ENCODE measurements at regions of chr4 and their contacts with region 1.

Region 1: DNA sequence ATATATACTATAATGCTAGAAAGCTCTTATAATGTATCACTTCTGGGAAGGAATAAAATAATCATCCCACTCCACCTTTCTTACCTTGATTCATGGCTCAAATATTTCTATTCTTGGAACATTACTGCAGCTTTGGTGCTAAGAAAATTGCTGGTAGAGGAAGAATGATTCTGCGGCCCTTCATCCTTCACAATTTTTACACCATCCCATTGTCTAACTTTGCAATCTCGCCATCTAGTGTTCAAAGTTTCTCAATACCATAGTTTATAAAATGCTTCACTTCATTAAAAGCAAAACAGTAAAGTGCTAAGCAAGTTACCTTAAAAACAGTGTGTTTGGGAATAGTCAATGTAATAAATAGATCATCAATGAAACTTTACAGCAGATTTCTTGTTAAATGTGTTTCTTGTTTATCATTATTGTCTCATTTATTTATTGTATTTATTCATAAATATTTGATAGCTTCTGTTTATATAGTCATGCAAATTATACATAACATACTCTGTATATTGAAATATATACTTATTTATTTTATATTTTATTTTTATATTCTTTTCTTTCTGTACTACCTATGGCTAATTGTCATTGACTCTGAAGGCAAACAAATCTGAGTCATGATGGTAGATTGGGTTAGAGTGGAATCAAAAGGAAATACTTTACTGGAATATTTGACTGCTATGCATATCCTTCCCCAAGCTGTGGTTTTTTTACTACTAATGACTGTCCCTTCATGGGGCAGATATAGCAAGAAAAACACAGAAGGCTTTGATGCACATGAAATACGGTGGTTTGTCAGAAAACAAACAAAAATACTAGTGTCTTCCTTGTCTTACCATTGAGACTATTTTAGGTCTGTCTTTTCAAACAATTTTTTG is 390.7 kb downstream of the MAPK10 start:
- DNase-seq: peak; percentile 31
- H3K4me3 ChIP-seq: no peak overlapping the region; a peak in 1 of 4 replicates
- H3K27ac ChIP-seq: peak overlapping the region in 1 of 2 experiments; percentile 29; a peak in 2 of 4 replicates
- H3K4me1 ChIP-seq: peaks cover 0 to 3% of the 10 kb centered on the region in 2 experiments; a peak in 1 of 4 replicates
- H3K27me3 ChIP-seq: no peaks in the 10 kb centered on the region
- CTCF ChIP-seq: peak; percentile 73
- EP300 ChIP-seq: no peak
- RAD21 ChIP-seq: peak; percentile 80

Region 2: GRCh38 chr4:85792376-85793232 is 176.6 kb before region 1 on chr4:
- CTCF ChIA-PET with region 1: interaction called, 117 read pairs
- POLR2A ChIA-PET with region 1: no interaction called
- DNase-seq: no peak
- H3K4me3 ChIP-seq: no peak overlapping the region
- H3K27ac ChIP-seq: peak overlapping the region in 1 of 2 experiments; percentile 85; a peak in 2 of 4 replicates
- H3K4me1 ChIP-seq: peaks cover 0 to 20% of the 10 kb centered on the region in 2 experiments; a peak in 2 of 4 replicates
- H3K27me3 ChIP-seq: no peaks in the 10 kb centered on the region
- CTCF ChIP-seq: no peak
- EP300 ChIP-seq: no peak
- RAD21 ChIP-seq: no peak

Region 3: GRCh38 chr4:85938062-85938461 is 31.1 kb before region 1 on chr4:
- CTCF ChIA-PET with region 1: interaction called, 10 read pairs
- POLR2A ChIA-PET with region 1: no interaction called
- DNase-seq: no peak
- H3K4me3 ChIP-seq: no peak overlapping the region
- H3K27ac ChIP-seq: no peak overlapping the region
- H3K4me1 ChIP-seq: no peaks in the 10 kb centered on the region
- H3K27me3 ChIP-seq: no peaks in the 10 kb centered on the region
- CTCF ChIP-seq: no peak
- EP300 ChIP-seq: no peak
- RAD21 ChIP-seq: no peak

Region 4: DNA sequence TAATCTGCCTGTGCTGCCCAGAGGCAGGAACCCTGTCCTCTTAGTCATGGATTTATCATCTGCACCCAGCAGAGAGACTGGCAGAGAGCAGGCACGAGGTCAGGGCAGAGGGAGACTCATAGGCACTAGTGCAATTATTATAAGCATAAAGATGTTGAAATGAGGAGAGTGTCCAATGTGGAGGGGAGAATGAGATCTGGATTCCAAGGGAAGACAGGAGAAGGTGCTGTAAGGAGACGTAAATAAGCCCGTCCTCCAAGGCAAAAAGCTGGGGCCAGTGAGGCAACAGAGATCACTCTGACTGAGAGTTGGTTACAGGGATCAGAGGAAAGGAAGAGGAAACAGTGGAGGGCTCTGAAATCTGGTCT is 15.5 kb before region 1 on chr4:
- CTCF ChIA-PET with region 1: interaction called, 20 read pairs
- POLR2A ChIA-PET with region 1: no interaction called
- DNase-seq: no peak
- H3K4me3 ChIP-seq: no peak overlapping the region
- H3K27ac ChIP-seq: peak overlapping the region in 1 of 2 experiments; percentile 61; a peak in 1 of 4 replicates
- H3K4me1 ChIP-seq: peaks cover 0 to 2% of the 10 kb centered on the region in 2 experiments; a peak in 2 of 4 replicates
- H3K27me3 ChIP-seq: no peaks in the 10 kb centered on the region
- CTCF ChIP-seq: no peak
- EP300 ChIP-seq: no peak
- RAD21 ChIP-seq: no peak

Region 5: DNA sequence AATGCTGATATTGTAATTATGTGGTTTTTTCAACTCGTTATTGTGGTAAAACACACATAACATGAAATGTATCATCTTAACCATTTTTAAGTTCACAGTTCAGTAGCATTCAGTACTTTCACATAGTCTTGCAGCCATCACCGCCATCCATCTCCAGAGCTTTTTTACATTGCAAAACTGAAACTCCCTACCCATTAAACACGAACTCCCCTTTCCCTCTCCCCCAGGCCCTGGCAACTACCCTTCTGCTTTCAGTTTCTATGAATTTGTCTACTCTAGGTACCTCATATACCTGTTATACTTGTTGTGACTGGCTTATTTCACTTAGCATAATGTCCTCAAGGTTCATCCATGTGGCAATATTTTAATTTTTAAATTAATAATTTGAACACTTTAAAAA is 10.1 kb after region 1 on chr4:
- CTCF ChIA-PET with region 1: interaction called, 19 read pairs
- POLR2A ChIA-PET with region 1: no interaction called
- DNase-seq: no peak
- H3K4me3 ChIP-seq: no peak overlapping the region
- H3K27ac ChIP-seq: no peak overlapping the region
- H3K4me1 ChIP-seq: no peaks in the 10 kb centered on the region
- H3K27me3 ChIP-seq: no peaks in the 10 kb centered on the region
- CTCF ChIP-seq: no peak
- EP300 ChIP-seq: no peak
- RAD21 ChIP-seq: no peak

Measured in SK-N-SH (cell line).